Activated CD4-positive, alpha-beta T cell treated with anti-CD3 and anti-CD28 coated beads, Interleukin-2, amount 10 ng/mL, durations not matched to agents 7 days and 5 days (primary cell): ENCODE measurements at regions of chr12 and their contacts with region 1.

Region 1: GRCh38 chr12:51028126-51028810 is 2.1 kb upstream of the SLC11A2 start:
- DNase-seq: peak; percentile 31
- H3K4me3 Mint-ChIP-seq: no peak overlapping the region
- H3K27ac Mint-ChIP-seq: no peak overlapping the region
- H3K4me1 Mint-ChIP-seq: peaks cover 35% of the 10 kb centered on the region
- H3K27me3 Mint-ChIP-seq: peaks cover 7% of the 10 kb centered on the region

Region 2: DNA sequence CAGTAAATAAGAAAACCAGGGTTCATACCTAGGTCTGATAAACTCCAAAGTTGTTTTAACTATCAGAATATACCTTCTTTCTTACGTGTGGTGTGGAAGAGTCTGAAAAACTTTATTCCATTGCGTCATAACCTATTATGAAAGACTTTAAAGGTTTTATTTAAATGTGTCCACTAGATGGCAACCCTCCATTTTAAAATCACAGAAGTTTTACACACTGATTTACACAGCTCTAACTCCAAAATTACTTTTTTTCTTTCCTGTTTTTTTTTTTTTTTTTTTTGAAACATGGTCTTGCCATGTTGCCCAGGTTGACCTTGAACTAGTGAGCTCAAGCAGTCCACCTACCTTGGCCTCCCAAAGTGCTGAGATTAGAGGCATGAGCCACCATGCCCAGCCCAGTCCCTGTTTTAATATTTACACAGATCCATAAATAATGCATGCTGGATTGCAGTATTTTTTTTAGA is 202.9 kb before region 1 on chr12:
- CTCF ChIA-PET with region 1: no interaction called
- POLR2A ChIA-PET with region 1: no interaction called
- DNase-seq: no peak
- H3K4me3 Mint-ChIP-seq: no peak overlapping the region
- H3K27ac Mint-ChIP-seq: peak overlapping the region; percentile 33
- H3K4me1 Mint-ChIP-seq: peaks cover 5% of the 10 kb centered on the region
- H3K27me3 Mint-ChIP-seq: no peaks in the 10 kb centered on the region

Region 3: DNA sequence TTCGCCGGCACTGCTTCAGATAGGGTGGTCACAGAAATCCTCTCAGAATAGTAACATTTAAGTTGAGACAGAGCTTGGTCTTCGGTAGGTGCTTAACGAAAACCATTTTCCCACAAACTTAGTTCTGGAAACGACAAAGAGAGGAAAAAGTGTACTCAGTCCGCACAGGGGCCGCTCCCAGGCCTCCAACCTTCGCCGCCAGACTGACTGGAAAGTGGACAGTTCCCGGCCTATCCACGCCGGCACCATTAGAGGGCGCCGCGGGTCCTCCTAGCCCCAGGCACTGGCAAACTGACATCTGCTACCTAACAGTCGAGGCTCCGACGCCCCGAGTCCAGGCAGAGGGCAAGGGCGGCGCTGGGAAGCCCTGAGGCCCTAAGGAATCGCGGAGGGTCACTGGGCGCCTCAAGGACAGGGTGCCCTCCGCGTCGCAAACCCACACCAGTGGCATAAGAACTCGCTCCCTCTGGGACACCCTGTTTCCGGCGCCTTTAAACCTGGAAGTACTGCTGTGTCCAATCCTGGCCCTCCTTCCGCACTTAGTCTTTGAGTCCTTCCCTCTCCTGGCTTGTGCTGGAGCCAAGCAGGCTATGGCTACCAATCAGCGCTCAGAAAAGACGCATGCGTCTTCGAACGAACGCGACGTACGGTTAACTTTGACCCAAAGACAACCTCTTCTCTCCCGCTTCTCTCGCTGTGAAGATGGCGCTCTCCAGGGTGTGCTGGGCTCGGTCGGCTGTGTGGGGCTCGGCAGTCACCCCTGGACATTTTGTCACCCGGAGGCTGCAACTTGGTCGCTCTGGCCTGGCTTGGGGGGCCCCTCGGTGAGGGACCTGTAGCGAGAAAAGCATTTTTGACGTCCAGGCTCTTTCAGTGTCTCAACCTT is 19.6 kb after region 1 on chr12 and contains the start of gene LETMD1:
- CTCF ChIA-PET with region 1: interaction called, 16 read pairs
- POLR2A ChIA-PET with region 1: no interaction called
- DNase-seq: peak; percentile 96
- H3K4me3 Mint-ChIP-seq: peak within 1 kb of the TSS; percentile 93
- H3K27ac Mint-ChIP-seq: peak within 1 kb of the TSS; percentile 96
- H3K4me1 Mint-ChIP-seq: peaks cover 38% of the 10 kb centered on the region
- H3K27me3 Mint-ChIP-seq: no peaks in the 10 kb centered on the region
- total RNA-seq, gene LETMD1: 66.3 to 68.6 TPM